Mammary epithelial cell (primary cell): ENCODE measurements at regions of chr12 and their contacts with region 1.

Region 1: DNA sequence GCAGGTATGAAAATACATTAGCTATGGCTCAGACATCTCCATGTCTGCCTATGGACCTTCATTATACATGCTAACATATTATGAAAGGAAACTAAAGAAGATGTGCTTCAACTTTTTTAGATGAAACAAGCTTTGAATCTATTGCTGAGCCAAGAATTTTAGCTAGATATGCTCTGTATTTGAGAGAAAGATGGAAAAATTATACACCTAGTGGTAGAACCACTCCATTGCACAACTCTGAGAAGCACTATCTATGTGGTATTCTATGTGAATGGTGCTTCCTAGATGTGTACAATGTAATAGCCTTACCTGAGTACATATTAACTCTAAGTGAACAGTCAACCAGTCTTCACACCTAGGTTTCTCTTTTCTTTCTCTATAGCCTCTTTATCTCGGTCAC is 17.3 kb downstream of the EPYC start:
- DNase-seq: peak; percentile 0
- H3K4me3 ChIP-seq: no peak overlapping the region
- H3K27ac ChIP-seq: no peak overlapping the region
- H3K4me1 ChIP-seq: no peaks in the 10 kb centered on the region
- H3K27me3 ChIP-seq: peaks cover 2% of the 10 kb centered on the region
- CTCF ChIP-seq: peak in 1 of 2 donors; percentile 20

Region 2: GRCh38 chr12:90515199-90516175 is 472.0 kb before region 1 on chr12:
- CTCF ChIA-PET with region 1: no interaction called
- dilution Hi-C with region 1: no loop called
- in situ Hi-C with region 1: no loop called
- intact Hi-C with region 1: no loop called
- DNase-seq: no peak
- H3K4me3 ChIP-seq: no peak overlapping the region
- H3K27ac ChIP-seq: no peak overlapping the region
- H3K4me1 ChIP-seq: no peaks in the 10 kb centered on the region
- H3K27me3 ChIP-seq: no peaks in the 10 kb centered on the region
- CTCF ChIP-seq: no peak

Region 3: DNA sequence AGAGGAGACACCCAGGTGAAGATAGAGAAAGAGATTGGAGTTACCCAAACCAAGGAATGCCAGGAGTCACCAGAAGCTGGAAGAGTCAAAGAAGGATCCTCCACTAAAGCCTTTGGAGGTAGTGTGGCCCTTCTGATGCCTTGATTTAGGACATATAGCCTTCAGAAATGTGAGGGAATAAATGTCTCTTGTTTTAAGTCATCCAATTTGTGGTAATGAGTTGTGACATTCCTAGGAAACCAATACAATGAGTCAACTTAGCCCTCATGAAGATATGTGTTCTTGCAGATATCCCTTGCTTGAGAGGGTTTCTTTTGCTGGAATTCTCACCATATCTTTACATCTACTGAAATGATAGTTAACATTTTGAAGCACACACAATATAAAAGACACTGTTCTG is 91.4 kb before region 1 on chr12:
- CTCF ChIA-PET with region 1: interaction called, 21 read pairs
- dilution Hi-C with region 1: no loop called
- in situ Hi-C with region 1: no loop called
- intact Hi-C with region 1: no loop called
- DNase-seq: peak; percentile 64
- H3K4me3 ChIP-seq: no peak overlapping the region
- H3K27ac ChIP-seq: peak overlapping the region; percentile 11
- H3K4me1 ChIP-seq: peaks cover 27% of the 10 kb centered on the region
- H3K27me3 ChIP-seq: no peaks in the 10 kb centered on the region
- CTCF ChIP-seq: no peak

Region 4: DNA sequence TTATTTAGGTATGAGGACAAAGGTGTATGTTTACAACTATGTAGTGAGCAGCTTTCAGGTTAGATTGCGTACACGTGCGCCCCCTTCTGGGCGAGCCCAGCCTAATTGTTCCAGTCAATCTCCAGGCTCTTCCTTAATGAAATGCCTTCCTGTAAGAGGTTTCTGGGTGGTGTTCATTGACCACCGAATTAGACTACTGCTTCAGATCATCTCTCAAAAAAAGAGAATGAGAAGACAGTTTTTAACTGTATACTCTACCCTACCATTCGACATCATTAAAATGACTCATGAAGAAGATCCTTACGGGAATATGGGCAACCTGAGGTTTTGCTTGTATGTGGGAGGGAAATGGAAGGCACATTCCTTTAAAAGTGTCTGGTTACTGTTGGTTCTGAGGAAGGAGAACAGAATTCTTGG is 121.6 kb after region 1 on chr12:
- CTCF ChIA-PET with region 1: no interaction called
- dilution Hi-C with region 1: no loop called
- in situ Hi-C with region 1: loop called (anchors 10 kb)
- intact Hi-C with region 1: no loop called
- DNase-seq: peak; percentile 47
- H3K4me3 ChIP-seq: no peak overlapping the region
- H3K27ac ChIP-seq: no peak overlapping the region
- H3K4me1 ChIP-seq: no peaks in the 10 kb centered on the region
- H3K27me3 ChIP-seq: no peaks in the 10 kb centered on the region
- CTCF ChIP-seq: peak; percentile 72 to 79